CD8-positive, alpha-beta T cell (primary cell): ENCODE measurements at regions of chr16 and their contacts with region 1.

Region 1: DNA sequence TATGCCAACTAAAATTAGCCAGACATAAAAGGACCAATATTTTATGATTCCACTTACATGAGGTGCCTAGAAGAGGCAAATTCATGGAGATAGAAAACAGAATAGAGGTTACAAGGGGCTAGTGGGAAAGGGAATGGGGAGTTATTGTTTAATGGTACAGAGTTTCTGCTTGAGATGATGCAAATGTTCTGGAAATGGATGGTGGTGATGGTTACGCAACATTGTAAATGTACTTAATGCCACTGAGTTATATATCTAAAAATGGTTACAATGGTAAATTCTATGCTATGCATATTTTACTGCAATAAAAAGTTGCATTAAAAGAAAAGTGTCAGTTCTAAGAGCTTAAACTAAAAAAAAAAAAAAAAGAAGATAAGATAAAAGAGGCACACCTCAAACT is 17.9 kb downstream of the MT1X start:
- DNase-seq: no peak
- ATAC-seq: no peak
- H3K4me3 ChIP-seq: no peak overlapping the region
- H3K4me3 Mint-ChIP-seq: no peak overlapping the region
- H3K27ac ChIP-seq: no peak overlapping the region
- H3K27ac Mint-ChIP-seq: no peak overlapping the region
- H3K4me1 ChIP-seq: peaks cover 4% of the 10 kb centered on the region
- H3K4me1 Mint-ChIP-seq: peaks cover 11% of the 10 kb centered on the region
- H3K27me3 ChIP-seq: no peaks in the 10 kb centered on the region
- H3K27me3 Mint-ChIP-seq: no peaks in the 10 kb centered on the region
- CTCF ChIP-seq: no peak

Region 2: GRCh38 chr16:55711959-55712876 is 988.0 kb before region 1 on chr16:
- CTCF ChIA-PET with region 1: no interaction called
- POLR2A ChIA-PET with region 1: no interaction called
- intact Hi-C with region 1: loop called in 1 of 2 experiments (anchors 5 kb)
- DNase-seq: peak in 8 of 9 experiments; percentile 36 to 70 (median 59)
- ATAC-seq: no peak
- H3K4me3 ChIP-seq: no peak overlapping the region
- H3K4me3 Mint-ChIP-seq: no peak overlapping the region
- H3K27ac ChIP-seq: no peak overlapping the region
- H3K27ac Mint-ChIP-seq: no peak overlapping the region
- H3K4me1 ChIP-seq: no peaks in the 10 kb centered on the region
- H3K4me1 Mint-ChIP-seq: no peaks in the 10 kb centered on the region
- H3K27me3 ChIP-seq: no peaks in the 10 kb centered on the region
- H3K27me3 Mint-ChIP-seq: peaks cover 25% of the 10 kb centered on the region
- CTCF ChIP-seq: peak; percentile 67

Region 3: GRCh38 chr16:56353111-56353921 is 346.9 kb before region 1 on chr16:
- CTCF ChIA-PET with region 1: no interaction called
- POLR2A ChIA-PET with region 1: no interaction called
- intact Hi-C with region 1: no loop called
- DNase-seq: no peak
- ATAC-seq: no peak
- H3K4me3 ChIP-seq: no peak overlapping the region
- H3K4me3 Mint-ChIP-seq: no peak overlapping the region
- H3K27ac ChIP-seq: no peak overlapping the region
- H3K27ac Mint-ChIP-seq: no peak overlapping the region
- H3K4me1 ChIP-seq: peaks cover 8% of the 10 kb centered on the region
- H3K4me1 Mint-ChIP-seq: peaks cover 13% of the 10 kb centered on the region
- H3K27me3 ChIP-seq: no peaks in the 10 kb centered on the region
- H3K27me3 Mint-ChIP-seq: no peaks in the 10 kb centered on the region
- CTCF ChIP-seq: no peak

Region 4: DNA sequence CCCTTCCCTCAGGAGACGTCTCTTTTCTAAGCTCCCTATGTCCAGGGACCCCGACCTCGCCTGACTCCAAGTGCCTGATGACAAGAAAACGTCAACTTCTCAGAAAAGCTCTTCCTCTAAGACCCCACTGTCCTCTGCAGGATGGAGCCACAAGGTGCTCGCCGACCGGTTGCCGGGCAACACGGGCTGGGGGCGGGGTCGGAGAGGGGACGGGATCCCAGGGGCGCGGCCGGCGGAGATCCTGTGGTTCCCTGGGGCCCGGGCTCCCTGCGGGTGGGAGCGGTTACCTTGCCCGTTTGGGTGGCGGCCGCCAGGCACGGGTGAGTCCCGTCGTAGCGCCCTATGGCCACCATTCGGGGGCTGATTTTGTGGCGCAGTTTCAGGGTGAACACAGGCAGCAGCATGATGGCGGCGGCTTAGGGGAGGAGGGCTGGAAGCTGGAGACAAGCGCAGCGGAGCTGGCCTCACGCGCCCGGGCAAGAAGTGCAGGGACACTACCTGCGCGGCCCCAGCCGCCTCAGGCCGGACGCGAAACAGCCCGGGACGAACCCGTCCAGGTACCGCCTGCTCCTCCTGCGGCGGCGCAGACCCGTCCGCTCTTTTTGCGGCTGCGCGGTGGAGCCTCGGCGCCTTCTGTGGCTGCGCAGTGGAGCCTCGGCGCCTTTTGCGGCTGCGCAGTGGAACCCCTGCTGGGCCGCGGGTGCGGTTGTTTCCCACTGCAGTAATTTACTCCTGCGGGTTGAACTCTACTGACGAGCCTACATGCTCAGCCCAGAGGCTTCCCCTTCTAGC is 180.5 kb before region 1 on chr16 and contains the start of gene BBS2:
- CTCF ChIA-PET with region 1: interaction called, 35 read pairs
- POLR2A ChIA-PET with region 1: interaction called, 3 read pairs
- intact Hi-C with region 1: loop called (anchors 1 kb)
- DNase-seq: peak; percentile 84 to 96 (median 92)
- ATAC-seq: peak; percentile 83
- H3K4me3 ChIP-seq: peak within 1 kb of the TSS; percentile 94 to 99
- H3K4me3 Mint-ChIP-seq: peak within 1 kb of the TSS; percentile 86
- H3K27ac ChIP-seq: peak within 1 kb of the TSS; percentile 82 to 92
- H3K27ac Mint-ChIP-seq: peak within 1 kb of the TSS; percentile 92
- H3K4me1 ChIP-seq: peaks cover 32% of the 10 kb centered on the region
- H3K4me1 Mint-ChIP-seq: peaks cover 50% of the 10 kb centered on the region
- H3K27me3 ChIP-seq: no peaks in the 10 kb centered on the region
- H3K27me3 Mint-ChIP-seq: no peaks in the 10 kb centered on the region
- CTCF ChIP-seq: no peak
- total RNA-seq, gene BBS2: 60.6 to 62.1 TPM

Region 5: DNA sequence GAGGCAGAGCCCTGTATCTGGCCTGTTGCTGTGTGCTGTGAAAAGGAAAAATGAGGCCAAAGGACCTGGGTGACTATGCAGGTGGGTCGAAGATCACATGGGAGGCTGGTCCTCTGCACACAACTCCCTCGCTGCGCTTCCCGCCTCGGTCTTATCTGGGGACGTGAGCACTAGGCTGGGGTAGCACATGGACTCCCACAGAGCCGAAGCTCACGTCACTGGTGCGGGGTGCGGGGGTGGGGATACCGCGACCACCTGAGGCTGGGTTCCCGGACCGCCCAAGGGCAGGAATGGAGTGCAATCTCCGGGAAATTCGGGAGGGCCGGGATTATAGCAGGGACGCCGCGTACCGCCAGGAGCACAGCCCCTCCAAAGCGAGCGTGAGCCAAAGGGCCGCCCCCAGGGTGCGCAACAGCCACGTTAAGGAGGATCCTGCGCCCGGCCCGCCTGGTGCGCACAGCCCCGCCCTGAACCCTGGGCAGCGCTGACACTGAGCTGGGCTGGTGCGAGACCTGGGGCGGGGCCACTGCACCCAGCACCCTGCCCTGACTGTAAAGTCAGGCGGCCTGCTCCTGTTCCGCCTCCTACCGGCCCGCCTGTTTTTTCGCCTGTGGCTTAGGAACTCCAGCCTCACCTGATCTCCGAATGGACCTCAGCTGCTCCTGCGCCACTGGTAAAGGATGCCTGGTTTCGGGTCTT is 57.0 kb before region 1 on chr16:
- CTCF ChIA-PET with region 1: interaction called, 6 read pairs
- POLR2A ChIA-PET with region 1: interaction called, 4 read pairs
- intact Hi-C with region 1: loop called in 1 of 2 experiments (anchors 5 kb)
- DNase-seq: peak; percentile 52 to 92 (median 77)
- ATAC-seq: peak; percentile 99
- H3K4me3 ChIP-seq: peak overlapping the region; percentile 33 to 47
- H3K4me3 Mint-ChIP-seq: peak overlapping the region; percentile 71
- H3K27ac ChIP-seq: peak overlapping the region in 1 of 2 experiments; percentile 3
- H3K27ac Mint-ChIP-seq: no peak overlapping the region
- H3K4me1 ChIP-seq: peaks cover 11% of the 10 kb centered on the region
- H3K4me1 Mint-ChIP-seq: peaks cover 23% of the 10 kb centered on the region
- H3K27me3 ChIP-seq: peaks cover 3 to 5% of the 10 kb centered on the region in 2 experiments
- H3K27me3 Mint-ChIP-seq: peaks cover 23% of the 10 kb centered on the region
- CTCF ChIP-seq: peak; percentile 19

Region 6: DNA sequence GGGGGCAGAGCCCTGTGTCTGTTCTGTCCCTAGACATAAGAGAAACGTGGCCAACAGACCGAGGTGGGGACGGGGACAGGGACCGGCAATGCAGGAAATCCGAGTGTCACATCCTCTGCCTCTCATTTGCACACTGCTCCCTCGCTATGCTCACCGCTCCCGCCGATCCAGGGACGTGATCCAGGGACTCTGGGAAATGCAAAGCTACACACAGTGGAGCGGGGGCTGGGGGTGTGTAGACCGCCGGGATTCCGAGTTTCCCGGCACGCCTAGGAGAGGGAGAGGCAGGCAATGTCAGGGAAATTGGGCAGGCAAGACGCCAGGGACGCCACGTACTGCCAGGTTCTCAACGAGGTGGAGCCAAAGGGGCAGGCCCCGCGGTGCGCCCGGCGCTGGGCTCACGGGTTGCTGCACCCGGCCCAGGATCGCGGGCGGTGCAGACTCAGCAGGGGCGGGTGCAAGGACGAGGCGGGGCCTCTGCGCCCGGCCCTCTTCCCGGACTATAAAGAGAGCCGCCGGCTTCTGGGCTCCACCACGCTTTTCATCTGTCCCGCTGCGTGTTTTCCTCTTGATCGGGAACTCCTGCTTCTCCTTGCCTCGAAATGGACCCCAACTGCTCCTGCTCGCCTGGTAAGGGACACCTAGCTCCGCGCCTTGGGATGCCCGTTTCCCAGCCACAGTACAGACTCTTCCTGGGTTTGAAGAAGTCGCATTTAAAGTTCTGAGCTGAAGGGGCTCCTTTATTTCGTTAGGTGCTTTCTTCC is 18.1 kb before region 1 on chr16 and contains the start of gene MT1X:
- CTCF ChIA-PET with region 1: interaction called, 57 read pairs
- POLR2A ChIA-PET with region 1: interaction called, 6 read pairs
- intact Hi-C with region 1: loop called (anchors 1 to 2 kb)
- DNase-seq: peak; percentile 63 to 94 (median 88)
- ATAC-seq: peak; percentile 99
- H3K4me3 ChIP-seq: peak within 1 kb of the TSS; percentile 58 to 82
- H3K4me3 Mint-ChIP-seq: peak within 1 kb of the TSS; percentile 96
- H3K27ac ChIP-seq: peak within 1 kb of the TSS; percentile 60 to 80
- H3K27ac Mint-ChIP-seq: peak within 1 kb of the TSS; percentile 97
- H3K4me1 ChIP-seq: peaks cover 18% of the 10 kb centered on the region
- H3K4me1 Mint-ChIP-seq: peaks cover 25% of the 10 kb centered on the region
- H3K27me3 ChIP-seq: no peaks in the 10 kb centered on the region
- H3K27me3 Mint-ChIP-seq: no peaks in the 10 kb centered on the region
- CTCF ChIP-seq: no peak
- total RNA-seq, gene MT1X: 18.6 to 26.2 TPM

Region 7: GRCh38 chr16:56789360-56789759 is 89.2 kb after region 1 on chr16:
- CTCF ChIA-PET with region 1: interaction called, 9 read pairs
- POLR2A ChIA-PET with region 1: interaction called, 3 read pairs
- intact Hi-C with region 1: loop called in 1 of 2 experiments (anchors 1 kb)
- DNase-seq: peak in 4 of 9 experiments; percentile 5 to 50 (median 44)
- ATAC-seq: peak; percentile 55
- H3K4me3 ChIP-seq: no peak overlapping the region
- H3K4me3 Mint-ChIP-seq: no peak overlapping the region
- H3K27ac ChIP-seq: no peak overlapping the region
- H3K27ac Mint-ChIP-seq: no peak overlapping the region
- H3K4me1 ChIP-seq: no peaks in the 10 kb centered on the region
- H3K4me1 Mint-ChIP-seq: peaks cover 3% of the 10 kb centered on the region
- H3K27me3 ChIP-seq: no peaks in the 10 kb centered on the region
- H3K27me3 Mint-ChIP-seq: no peaks in the 10 kb centered on the region
- CTCF ChIP-seq: peak; percentile 23